Activated T-helper 2 cell treated with anti-CD3 and anti-CD28 coated beads, Interferon-gamma antibody, Interleukin-2, Interleukin-4, amounts not matched to agents 10 μg/mL and 5 μg/mL and 100 μg/mL, durations not matched to agents 14 hours and 24 hours and 36 hours (primary cell): ENCODE measurements at regions of chr1 and their contacts with region 1.

Region 1: DNA sequence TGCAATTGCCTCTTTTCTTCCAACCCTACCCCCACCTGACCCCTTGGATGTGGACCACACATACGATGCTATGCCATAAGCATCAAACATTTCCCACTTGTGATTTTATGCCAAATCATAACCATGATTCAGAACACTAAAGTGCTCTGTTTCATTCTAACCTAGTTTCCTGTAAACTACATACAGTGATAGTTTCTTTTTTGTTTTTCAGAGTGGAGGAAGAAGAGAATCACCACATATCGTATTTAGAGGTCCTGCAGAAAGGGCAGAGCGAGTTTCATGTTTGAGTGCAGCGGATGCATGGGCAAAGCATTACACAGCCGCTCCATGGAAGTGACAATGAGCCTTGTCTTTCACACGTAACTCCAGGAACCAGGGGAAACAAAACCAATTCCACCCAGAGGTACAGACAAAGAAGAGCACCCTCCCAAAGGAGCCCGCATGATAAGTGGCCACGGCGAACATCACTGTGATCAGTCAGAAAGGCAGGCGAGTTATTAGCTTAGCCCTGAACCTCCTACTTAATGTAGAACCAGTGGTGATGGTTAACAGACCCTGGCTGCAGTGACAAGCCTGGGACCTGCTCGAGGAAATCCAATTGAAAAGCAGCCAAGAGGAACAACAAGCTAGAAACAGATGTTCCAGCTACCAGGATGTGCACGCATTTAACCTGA is 64.0 kb upstream of the ZNF281 start:
- DNase-seq: no peak
- H3K4me3 Mint-ChIP-seq: no peak overlapping the region
- H3K27ac Mint-ChIP-seq: peak overlapping the region; percentile 62
- H3K4me1 Mint-ChIP-seq: peaks cover 26% of the 10 kb centered on the region
- H3K27me3 Mint-ChIP-seq: peaks cover 33% of the 10 kb centered on the region

Region 2: GRCh38 chr1:200279810-200280411 is 193.9 kb before region 1 on chr1:
- intact Hi-C with region 1: no loop called
- DNase-seq: no peak
- H3K4me3 Mint-ChIP-seq: no peak overlapping the region
- H3K27ac Mint-ChIP-seq: no peak overlapping the region
- H3K4me1 Mint-ChIP-seq: no peaks in the 10 kb centered on the region
- H3K27me3 Mint-ChIP-seq: peaks cover 19% of the 10 kb centered on the region

Region 3: DNA sequence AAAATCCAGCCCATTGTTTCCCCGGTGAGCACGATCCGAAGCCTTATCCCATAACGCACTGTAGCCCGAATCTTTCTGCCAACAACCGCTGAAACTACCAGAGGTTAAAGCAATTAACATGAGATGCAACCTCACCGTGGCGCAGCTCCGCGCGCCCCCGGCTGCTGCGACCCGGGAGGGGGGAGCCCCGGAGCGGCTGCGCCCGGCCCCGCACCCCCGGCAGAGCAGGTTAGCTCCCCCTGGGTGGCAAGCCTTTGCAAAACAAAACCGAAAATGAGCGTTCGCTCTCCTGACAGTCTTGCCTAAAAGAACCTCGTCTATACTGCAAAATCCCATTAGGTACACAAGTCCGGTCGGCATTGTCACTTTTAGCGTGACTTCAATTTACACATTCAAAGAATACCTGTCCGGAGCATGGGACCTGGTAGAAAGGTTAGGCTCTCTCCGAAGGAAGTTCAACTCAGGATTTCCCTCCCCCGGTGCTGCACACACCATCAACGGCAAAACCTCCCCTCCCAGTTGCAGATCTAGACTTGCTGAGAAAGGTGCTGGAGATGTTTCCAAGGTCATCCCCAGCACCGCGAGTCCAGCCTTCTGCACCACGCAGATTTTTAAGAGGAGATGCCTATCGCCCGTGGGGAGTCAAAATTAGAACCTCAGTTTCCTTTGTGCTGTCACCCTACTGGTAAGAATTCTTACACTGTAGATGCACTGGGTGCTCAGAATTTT is 171.5 kb before region 1 on chr1:
- intact Hi-C with region 1: loop called (anchors 5 kb)
- DNase-seq: peak; percentile 52
- H3K4me3 Mint-ChIP-seq: peak overlapping the region; percentile 77
- H3K27ac Mint-ChIP-seq: no peak overlapping the region
- H3K4me1 Mint-ChIP-seq: peaks cover 23% of the 10 kb centered on the region
- H3K27me3 Mint-ChIP-seq: peaks cover 54% of the 10 kb centered on the region

Region 4: GRCh38 chr1:200437556-200438203 is 36.2 kb before region 1 on chr1:
- intact Hi-C with region 1: loop called (anchors 5 kb)
- DNase-seq: no peak
- H3K4me3 Mint-ChIP-seq: peak overlapping the region; percentile 55
- H3K27ac Mint-ChIP-seq: peak overlapping the region; percentile 92
- H3K4me1 Mint-ChIP-seq: peaks cover 27% of the 10 kb centered on the region
- H3K27me3 Mint-ChIP-seq: no peaks in the 10 kb centered on the region

Region 5: DNA sequence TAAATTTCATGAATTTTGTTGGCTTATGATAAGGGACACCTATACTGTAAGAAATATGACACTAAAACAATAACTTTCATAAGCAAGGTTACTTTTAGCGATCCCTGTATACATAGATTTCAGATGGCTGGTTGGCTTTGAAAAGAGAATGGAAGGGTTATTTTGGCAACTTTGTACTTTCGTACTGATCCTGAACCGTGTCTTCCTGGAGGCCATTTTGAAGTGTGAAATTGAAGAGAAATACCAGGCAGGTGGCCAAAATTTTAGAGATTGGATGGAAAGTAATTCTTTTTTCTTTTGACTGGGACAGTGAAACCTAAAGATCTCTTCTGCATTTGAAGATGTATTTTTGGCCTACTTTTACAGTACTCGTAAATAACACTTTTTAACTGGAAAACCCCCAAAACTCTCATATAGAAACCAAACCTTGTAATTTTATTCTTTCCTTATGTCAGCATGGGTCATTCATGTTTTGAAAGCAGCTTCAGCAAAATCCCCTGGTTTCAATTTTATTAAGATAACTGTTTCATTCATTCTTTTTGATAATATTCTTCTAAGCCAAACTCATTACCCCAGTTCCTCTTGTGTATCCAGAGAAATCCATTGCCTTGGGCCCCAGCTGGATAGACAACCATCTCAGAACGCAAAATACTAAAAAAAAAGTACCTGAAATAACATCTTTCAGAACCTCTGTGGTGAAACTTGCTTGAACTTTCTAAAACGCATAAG is 25.6 kb before region 1 on chr1:
- intact Hi-C with region 1: loop called (anchors 1 kb)
- DNase-seq: no peak
- H3K4me3 Mint-ChIP-seq: peak overlapping the region; percentile 6
- H3K27ac Mint-ChIP-seq: peak overlapping the region; percentile 92
- H3K4me1 Mint-ChIP-seq: peaks cover 38% of the 10 kb centered on the region
- H3K27me3 Mint-ChIP-seq: peaks cover 5% of the 10 kb centered on the region